ENCODE measurements at regions of chr1 and their contacts with region 1.

Region 1: DNA sequence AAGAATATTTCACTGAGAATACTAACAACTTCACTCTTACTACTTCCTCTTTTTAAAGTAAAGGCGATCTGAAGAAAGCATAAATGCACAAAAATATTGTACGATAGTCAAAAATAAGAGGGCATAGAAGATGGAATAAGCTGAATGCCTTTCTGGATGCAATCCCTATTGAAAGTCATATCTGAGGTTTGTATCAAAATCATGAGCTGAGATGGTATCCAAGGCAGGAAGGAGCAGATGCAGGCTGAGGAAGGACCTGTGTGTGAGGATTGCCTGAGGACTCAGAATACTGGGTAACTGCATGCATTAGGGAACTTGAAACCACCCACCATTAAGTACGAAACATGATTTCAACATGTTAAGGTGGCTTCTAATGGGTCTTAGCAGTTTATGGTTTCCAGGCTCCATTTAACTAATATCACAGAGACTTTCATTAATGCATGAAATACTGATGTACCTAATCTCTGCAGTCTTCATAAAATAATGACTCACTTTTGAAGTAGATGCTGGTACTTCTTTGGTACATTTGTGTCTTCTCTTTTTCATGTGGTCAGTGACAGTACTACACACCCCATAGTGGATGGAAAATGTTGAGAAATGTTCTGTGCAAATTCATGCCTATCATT is 29.6 kb upstream of the RGS1 start:
- DNase-seq: no peak
- H3K4me3 Mint-ChIP-seq: peak overlapping the region; percentile 14
- H3K27ac Mint-ChIP-seq: peak overlapping the region; percentile 56
- H3K4me1 Mint-ChIP-seq: peaks cover 51% of the 10 kb centered on the region
- H3K27me3 Mint-ChIP-seq: no peaks in the 10 kb centered on the region

Region 2: DNA sequence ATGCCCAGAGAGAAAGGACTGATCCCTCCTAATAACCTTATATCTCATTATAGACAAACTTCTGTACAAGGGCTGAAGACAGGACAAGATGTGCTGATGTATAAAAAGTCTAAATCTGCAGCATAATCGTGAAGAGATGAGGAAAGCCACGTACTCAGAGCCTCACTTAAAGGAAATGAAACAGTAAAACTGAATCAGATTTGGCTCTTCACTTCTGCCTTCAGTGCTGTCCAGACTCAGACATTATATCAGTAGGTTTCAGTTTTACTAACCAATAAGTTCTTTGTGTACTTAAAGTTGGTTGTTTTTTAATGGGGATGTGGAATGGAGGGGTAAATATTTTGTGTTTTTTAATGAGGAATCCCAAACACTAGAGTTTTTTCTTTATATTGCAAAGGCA is 15.8 kb before region 1 on chr1:
- intact Hi-C with region 1: loop called (anchors 1 kb)
- DNase-seq: peak; percentile 62
- H3K4me3 Mint-ChIP-seq: peak overlapping the region; percentile 53
- H3K27ac Mint-ChIP-seq: peak overlapping the region; percentile 42
- H3K4me1 Mint-ChIP-seq: peaks cover 23% of the 10 kb centered on the region
- H3K27me3 Mint-ChIP-seq: peaks cover 2% of the 10 kb centered on the region

Region 3: GRCh38 chr1:192639607-192640368 is 93.8 kb after region 1 on chr1:
- intact Hi-C with region 1: loop called (anchors 5 kb)
- DNase-seq: no peak
- H3K4me3 Mint-ChIP-seq: no peak overlapping the region
- H3K27ac Mint-ChIP-seq: no peak overlapping the region
- H3K4me1 Mint-ChIP-seq: peaks cover 4% of the 10 kb centered on the region
- H3K27me3 Mint-ChIP-seq: peaks cover 4% of the 10 kb centered on the region

Region 4: DNA sequence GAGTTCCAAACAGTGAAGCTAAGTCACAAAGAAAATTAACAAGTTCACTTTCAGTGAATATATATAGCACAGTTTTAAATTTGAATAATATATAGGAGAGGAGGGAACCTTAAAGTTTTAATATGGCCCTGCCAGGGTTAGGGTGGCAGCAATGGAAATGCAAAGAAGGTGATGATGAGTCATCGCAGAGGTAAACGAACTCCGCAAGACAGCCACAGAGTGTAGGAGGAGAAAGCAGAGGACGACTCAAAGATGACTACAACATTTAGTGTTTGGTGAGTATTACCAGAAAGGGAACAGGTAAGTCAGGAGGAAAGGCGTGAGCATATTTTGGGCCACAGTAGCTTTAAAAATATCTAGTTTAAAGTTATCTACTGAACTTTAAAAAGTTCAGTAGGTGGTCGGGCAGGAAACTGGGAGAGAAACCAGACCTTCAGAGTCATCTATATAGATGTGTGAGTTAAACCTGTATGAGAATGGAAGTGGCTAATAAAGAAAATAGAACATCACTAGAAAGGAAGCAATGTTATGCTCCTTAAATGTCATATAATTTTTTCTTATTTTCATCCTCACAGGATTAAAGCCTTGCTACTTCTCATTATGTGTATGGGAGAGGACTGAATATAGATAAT is 437.5 kb after region 1 on chr1:
- intact Hi-C with region 1: loop called (anchors 10 kb)
- DNase-seq: peak; percentile 69
- H3K4me3 Mint-ChIP-seq: peak overlapping the region; percentile 36
- H3K27ac Mint-ChIP-seq: peak overlapping the region; percentile 78
- H3K4me1 Mint-ChIP-seq: peaks cover 47% of the 10 kb centered on the region
- H3K27me3 Mint-ChIP-seq: no peaks in the 10 kb centered on the region